Activated CD4-positive, alpha-beta memory T cell treated with anti-CD3 and anti-CD28 coated beads for 36 hours (primary cell): ENCODE measurements at regions of chr22 and their contacts with region 1.

Region 1: DNA sequence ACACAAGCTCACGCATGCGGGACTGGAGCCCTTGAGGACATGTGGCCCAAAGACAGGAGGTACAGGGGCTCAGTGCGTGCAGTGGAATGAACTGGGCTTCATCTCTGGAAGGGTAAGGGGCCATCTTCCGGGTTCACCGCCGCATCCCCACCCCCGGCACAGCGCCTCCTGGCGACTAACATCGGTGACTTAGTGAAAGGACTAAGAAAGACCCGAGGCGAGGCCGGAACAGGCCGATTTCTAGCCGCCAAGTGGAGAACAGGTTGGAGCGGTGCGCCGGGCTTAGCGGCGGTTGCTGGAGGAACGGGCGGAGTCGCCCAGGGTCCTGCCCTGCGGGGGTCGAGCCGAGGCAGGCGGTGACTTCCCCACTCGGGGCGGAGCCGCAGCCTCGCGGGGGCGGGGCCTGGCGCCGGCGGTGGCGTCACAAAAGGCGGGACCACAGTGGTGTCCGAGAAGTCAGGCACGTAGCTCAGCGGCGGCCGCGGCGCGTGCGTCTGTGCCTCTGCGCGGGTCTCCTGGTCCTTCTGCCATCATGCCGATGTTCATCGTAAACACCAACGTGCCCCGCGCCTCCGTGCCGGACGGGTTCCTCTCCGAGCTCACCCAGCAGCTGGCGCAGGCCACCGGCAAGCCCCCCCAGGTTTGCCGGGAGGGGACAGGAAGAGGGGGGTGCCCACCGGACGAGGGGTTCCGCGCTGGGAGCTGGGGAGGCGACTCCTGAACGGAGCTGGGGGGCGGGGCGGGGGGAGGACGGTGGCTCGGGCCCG is at the start of gene MIF:
- DNase-seq: peak; percentile 98
- H3K4me3 Mint-ChIP-seq: peak within 1 kb of the TSS; percentile 97
- H3K27ac Mint-ChIP-seq: peak within 1 kb of the TSS; percentile 98
- H3K4me1 Mint-ChIP-seq: peaks cover 23% of the 10 kb centered on the region
- H3K27me3 Mint-ChIP-seq: no peaks in the 10 kb centered on the region
- total RNA-seq, gene MIF: 1,215 to 1,240 TPM

Region 2: DNA sequence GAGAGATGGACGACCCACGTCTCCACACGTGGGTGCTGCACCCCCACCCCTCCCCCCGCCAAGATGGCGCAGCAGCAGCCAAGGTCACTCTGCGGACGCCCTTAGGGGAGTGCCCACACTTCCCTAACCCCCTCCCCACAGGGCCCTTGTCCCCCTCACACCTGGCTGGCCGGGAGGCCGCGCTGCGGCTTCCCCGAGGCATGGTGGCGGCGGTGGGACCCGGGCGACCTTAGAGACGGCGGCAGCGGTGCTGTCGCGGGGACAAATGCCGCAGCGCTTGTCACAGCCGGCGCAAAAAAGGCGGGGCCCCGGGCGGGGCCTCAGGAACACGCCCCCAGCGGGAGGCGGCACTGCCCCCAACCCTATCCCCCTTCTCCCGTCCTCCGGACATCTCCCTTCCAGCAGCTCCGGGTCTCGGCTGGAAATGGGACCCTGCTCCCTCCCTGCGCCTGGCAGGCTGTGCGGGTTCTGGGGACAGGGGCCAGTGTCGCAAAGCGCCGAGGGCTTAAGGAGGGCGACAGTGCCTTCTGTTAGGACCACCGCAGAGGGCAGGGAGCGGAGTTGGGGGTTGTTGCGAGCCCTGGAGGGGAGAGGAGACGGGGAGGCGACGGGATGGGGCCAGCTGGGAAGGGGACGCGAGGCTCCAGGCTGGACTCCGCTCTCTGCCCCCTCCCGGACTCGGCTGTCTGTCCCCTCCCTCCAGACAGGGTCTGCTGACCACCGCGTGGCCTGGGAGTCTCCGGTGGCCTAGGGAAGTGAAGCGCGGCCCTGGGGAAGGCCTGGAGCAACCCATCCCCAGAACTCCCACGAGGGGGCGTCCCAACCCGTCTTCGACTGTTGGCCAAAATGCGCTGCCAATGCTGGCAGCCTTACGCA is 126.2 kb before region 1 on chr22 and contains the start of gene CHCHD10:
- CTCF ChIA-PET with region 1: interaction called, 12 read pairs
- POLR2A ChIA-PET with region 1: no interaction called
- intact Hi-C with region 1: no loop called
- DNase-seq: peak; percentile 84
- H3K4me3 Mint-ChIP-seq: peak within 1 kb of the TSS; percentile 76
- H3K27ac Mint-ChIP-seq: peak within 1 kb of the TSS; percentile 42
- H3K4me1 Mint-ChIP-seq: peaks cover 40% of the 10 kb centered on the region
- H3K27me3 Mint-ChIP-seq: no peaks in the 10 kb centered on the region
- total RNA-seq, gene CHCHD10: 144 to 157 TPM

Region 3: GRCh38 chr22:23816156-23816976 is 77.8 kb before region 1 on chr22:
- CTCF ChIA-PET with region 1: no interaction called
- POLR2A ChIA-PET with region 1: no interaction called
- intact Hi-C with region 1: no loop called
- DNase-seq: no peak
- H3K4me3 Mint-ChIP-seq: no peak overlapping the region
- H3K27ac Mint-ChIP-seq: no peak overlapping the region
- H3K4me1 Mint-ChIP-seq: peaks cover 7% of the 10 kb centered on the region
- H3K27me3 Mint-ChIP-seq: no peaks in the 10 kb centered on the region

Region 4: DNA sequence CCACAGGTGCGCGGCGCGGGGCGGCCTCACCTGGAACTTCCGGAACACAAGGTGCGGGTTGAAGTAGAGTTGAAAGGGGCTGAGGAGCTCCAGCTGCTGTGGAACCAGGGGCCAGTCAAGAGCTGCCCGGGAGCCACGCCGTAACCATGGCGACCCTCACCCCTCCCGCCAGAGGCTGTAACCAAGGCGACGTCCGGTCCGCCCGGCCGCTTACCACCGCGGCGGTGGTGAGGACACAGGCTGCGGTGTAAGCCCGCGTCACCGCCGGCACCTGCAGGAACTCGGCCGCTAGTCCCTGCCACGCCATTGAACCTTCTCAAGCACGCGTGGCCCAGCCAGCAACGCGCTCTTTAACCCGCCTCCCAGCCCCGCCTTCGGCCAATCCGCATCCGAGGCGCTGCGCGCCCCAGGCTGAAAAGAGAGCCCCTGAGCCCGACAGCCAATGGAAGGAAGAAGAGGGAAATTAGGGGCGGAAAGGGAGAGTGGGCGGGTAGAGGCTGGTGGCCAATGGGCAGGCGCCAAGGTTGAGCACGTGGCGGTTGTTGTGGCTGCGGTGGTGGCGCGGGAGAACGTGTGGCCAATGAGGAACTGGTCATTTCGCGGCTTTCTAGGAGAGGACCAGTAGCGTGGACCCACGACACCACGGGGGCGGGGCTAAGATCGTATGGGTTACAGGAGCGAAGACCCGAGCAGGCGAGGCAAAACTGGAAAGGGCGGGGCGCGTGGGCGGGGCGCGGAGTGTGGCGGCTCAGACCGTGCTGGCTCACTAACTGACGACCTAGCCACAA is 55.3 kb before region 1 on chr22 and contains the start of gene DERL3:
- CTCF ChIA-PET with region 1: no interaction called
- POLR2A ChIA-PET with region 1: no interaction called
- intact Hi-C with region 1: loop called (anchors 2 kb)
- DNase-seq: peak; percentile 98
- H3K4me3 Mint-ChIP-seq: peak within 1 kb of the TSS; percentile 88
- H3K27ac Mint-ChIP-seq: peak within 1 kb of the TSS; percentile 70
- H3K4me1 Mint-ChIP-seq: peaks cover 19% of the 10 kb centered on the region
- H3K27me3 Mint-ChIP-seq: peaks cover 2% of the 10 kb centered on the region
- total RNA-seq, gene DERL3: 8.1 to 9.7 TPM

Region 5: GRCh38 chr22:23857606-23858483 is 36.3 kb before region 1 on chr22 and contains the start of gene SLC2A11:
- CTCF ChIA-PET with region 1: interaction called, 45 read pairs
- POLR2A ChIA-PET with region 1: interaction called, 18 read pairs
- intact Hi-C with region 1: loop called (anchors 5 kb)
- DNase-seq: peak; percentile 96
- H3K4me3 Mint-ChIP-seq: peak within 1 kb of the TSS; percentile 89
- H3K27ac Mint-ChIP-seq: peak within 1 kb of the TSS; percentile 78
- H3K4me1 Mint-ChIP-seq: peaks cover 17% of the 10 kb centered on the region
- H3K27me3 Mint-ChIP-seq: no peaks in the 10 kb centered on the region
- total RNA-seq, gene SLC2A11: 6.8 to 8.9 TPM

Region 6: DNA sequence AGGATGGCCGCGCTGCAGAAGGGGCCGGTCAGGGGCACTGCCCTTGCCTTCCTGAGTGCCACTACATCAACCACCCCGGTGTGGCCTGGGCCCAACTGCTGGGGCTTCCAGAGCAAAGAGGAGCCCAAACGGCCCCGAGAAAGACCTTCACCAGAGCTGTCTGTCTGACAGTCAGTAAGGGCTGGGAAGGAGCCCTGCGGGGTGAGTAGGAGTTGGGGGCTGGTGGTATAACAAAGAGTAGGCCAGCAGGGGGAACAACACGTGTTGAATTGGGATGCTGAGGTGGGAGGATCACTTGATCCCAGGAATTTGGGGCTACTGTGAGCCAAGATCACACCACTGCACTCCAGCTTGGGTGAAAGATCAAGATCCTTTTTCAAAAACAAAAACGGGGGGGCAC is 107.2 kb after region 1 on chr22:
- CTCF ChIA-PET with region 1: no interaction called
- POLR2A ChIA-PET with region 1: no interaction called
- intact Hi-C with region 1: no loop called
- DNase-seq: no peak
- H3K4me3 Mint-ChIP-seq: no peak overlapping the region
- H3K27ac Mint-ChIP-seq: no peak overlapping the region
- H3K4me1 Mint-ChIP-seq: peaks cover 2% of the 10 kb centered on the region
- H3K27me3 Mint-ChIP-seq: peaks cover 4% of the 10 kb centered on the region

Region 7: GRCh38 chr22:24156913-24157821 is 263.0 kb after region 1 on chr22:
- CTCF ChIA-PET with region 1: interaction called, 3 read pairs
- POLR2A ChIA-PET with region 1: interaction called, 5 read pairs
- intact Hi-C with region 1: loop called (anchors 10 kb)
- DNase-seq: peak; percentile 92
- H3K4me3 Mint-ChIP-seq: peak overlapping the region; percentile 80
- H3K27ac Mint-ChIP-seq: peak overlapping the region; percentile 79
- H3K4me1 Mint-ChIP-seq: peaks cover 62% of the 10 kb centered on the region
- H3K27me3 Mint-ChIP-seq: no peaks in the 10 kb centered on the region